ENCODE measurements at regions of chr4 and their contacts with region 1.

Region 1: DNA sequence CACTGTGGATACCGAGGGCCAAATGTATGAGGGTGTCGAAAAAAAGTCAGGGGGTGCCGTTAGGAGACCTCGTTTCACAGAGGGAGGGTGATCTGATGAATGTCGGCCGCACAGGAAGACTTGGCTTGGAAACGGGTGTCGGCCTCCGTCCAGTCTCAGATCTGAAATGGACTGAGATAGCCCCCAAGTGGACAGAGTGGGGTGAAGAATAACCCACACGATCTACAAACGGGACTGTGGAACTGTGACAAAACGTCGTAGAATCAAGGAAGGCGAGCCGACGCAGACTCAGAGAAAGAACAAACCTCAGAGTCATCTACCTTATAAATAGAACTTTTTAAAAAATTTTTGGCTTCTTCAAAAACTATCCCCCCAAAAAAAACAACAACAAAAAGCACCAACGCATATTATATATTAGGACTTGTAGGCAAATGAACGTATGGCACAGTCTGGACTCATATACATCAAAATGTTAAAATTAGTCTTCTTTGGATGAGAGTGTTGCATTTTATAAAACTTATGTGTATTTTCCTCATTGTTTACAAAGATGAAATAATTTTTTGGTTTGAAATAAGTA is 63.8 kb upstream of the IRF2 start:
- DNase-seq: peak; percentile 75
- H3K4me3 Mint-ChIP-seq: peak overlapping the region; percentile 95
- H3K27ac Mint-ChIP-seq: peak overlapping the region; percentile 96
- H3K4me1 Mint-ChIP-seq: peaks cover 38% of the 10 kb centered on the region
- H3K27me3 Mint-ChIP-seq: no peaks in the 10 kb centered on the region

Region 2: GRCh38 chr4:184074989-184075388 is 463.1 kb before region 1 on chr4:
- CTCF ChIA-PET with region 1: no interaction called
- POLR2A ChIA-PET with region 1: no interaction called
- intact Hi-C with region 1: no loop called
- DNase-seq: no peak
- H3K4me3 Mint-ChIP-seq: no peak overlapping the region
- H3K27ac Mint-ChIP-seq: no peak overlapping the region
- H3K4me1 Mint-ChIP-seq: no peaks in the 10 kb centered on the region
- H3K27me3 Mint-ChIP-seq: peaks cover 21% of the 10 kb centered on the region

Region 3: GRCh38 chr4:184287697-184288255 is 250.3 kb before region 1 on chr4:
- CTCF ChIA-PET with region 1: interaction called, 5 read pairs
- POLR2A ChIA-PET with region 1: no interaction called
- intact Hi-C with region 1: loop called (anchors 1 kb)
- DNase-seq: no peak
- H3K4me3 Mint-ChIP-seq: no peak overlapping the region
- H3K27ac Mint-ChIP-seq: no peak overlapping the region
- H3K4me1 Mint-ChIP-seq: peaks cover 61% of the 10 kb centered on the region
- H3K27me3 Mint-ChIP-seq: peaks cover 4% of the 10 kb centered on the region

Region 4: DNA sequence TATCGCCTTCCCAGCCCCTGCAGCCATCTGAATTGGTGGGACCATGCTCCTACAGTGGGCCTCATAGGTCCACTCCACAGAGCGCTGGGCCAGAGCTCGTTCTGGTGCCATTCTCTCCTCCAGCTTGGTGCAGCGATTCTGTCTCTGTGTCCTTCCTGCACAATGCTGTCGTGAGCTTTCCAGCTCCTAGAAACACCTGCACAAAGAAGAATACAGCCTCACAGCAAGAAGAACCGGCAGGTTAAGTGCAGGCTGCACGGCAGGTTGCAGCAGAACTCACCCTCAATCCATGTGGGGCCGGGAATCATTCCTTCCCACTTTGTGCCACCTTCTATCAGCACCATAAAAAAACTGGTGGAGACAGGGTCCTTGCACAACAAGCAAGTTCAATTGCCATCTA is 219.3 kb before region 1 on chr4:
- CTCF ChIA-PET with region 1: no interaction called
- POLR2A ChIA-PET with region 1: no interaction called
- intact Hi-C with region 1: loop called (anchors 1 kb)
- DNase-seq: no peak
- H3K4me3 Mint-ChIP-seq: no peak overlapping the region
- H3K27ac Mint-ChIP-seq: no peak overlapping the region
- H3K4me1 Mint-ChIP-seq: peaks cover 34% of the 10 kb centered on the region
- H3K27me3 Mint-ChIP-seq: peaks cover 1% of the 10 kb centered on the region

Region 5: DNA sequence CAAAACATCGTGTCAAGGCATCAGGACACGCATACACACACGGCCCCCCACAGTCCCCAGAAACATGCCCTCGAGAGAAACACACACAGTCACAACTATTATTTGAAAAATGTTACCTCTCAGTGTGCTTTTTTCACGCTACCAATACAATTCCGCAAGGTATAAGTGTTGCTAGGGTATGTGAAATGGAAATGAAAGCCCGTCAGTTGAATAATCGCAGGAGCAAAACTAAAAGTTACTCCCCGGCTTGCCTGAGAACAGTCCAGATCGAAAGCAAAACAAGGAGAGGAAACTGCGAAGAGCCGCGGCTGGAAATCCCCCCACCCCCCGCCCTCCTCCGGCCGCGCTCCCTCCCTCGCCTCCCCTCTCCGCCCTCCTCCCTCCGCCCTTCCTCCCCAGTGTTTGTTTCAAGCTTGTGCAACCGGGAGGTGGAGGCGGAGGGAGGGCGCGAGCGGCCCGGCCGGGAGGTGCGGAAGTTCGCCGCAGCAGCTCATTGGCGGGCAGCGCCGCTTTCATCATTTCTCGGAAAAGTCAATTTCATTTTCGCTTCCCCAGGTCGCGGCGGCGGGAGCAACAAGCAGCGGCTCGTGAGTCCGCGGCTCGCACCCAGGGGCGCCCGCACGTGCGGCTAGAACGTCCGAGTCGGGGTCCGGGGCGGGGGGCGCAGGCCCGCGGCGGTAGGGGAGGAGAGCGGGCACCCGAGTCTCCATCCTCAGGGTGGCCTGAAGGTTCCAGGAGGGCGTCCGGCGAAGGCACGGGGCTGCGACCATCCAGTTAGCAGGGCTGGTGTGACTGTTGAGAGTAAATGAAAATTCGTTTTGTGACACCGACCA is 63.6 kb before region 1 on chr4 and contains the start of gene IRF2:
- CTCF ChIA-PET with region 1: interaction called, 13 read pairs
- POLR2A ChIA-PET with region 1: interaction called, 56 read pairs
- intact Hi-C with region 1: loop called (anchors 1 kb)
- DNase-seq: peak; percentile 99
- H3K4me3 Mint-ChIP-seq: peak within 1 kb of the TSS; percentile 99
- H3K27ac Mint-ChIP-seq: peak within 1 kb of the TSS; percentile 100
- H3K4me1 Mint-ChIP-seq: peaks cover 57% of the 10 kb centered on the region
- H3K27me3 Mint-ChIP-seq: no peaks in the 10 kb centered on the region
- total RNA-seq, gene IRF2: 48.1 to 50.9 TPM

Region 6: GRCh38 chr4:184575306-184575705 is 37.2 kb after region 1 on chr4:
- CTCF ChIA-PET with region 1: interaction called, 3 read pairs
- POLR2A ChIA-PET with region 1: interaction called, 3 read pairs
- intact Hi-C with region 1: loop called (anchors 1 kb)
- DNase-seq: no peak
- H3K4me3 Mint-ChIP-seq: no peak overlapping the region
- H3K27ac Mint-ChIP-seq: no peak overlapping the region
- H3K4me1 Mint-ChIP-seq: peaks cover 17% of the 10 kb centered on the region
- H3K27me3 Mint-ChIP-seq: no peaks in the 10 kb centered on the region

Region 7: GRCh38 chr4:185203486-185204237 is 665.6 kb after region 1 on chr4 and contains the start of gene CFAP97:
- CTCF ChIA-PET with region 1: no interaction called
- POLR2A ChIA-PET with region 1: no interaction called
- intact Hi-C with region 1: loop called (anchors 5 kb)
- DNase-seq: peak; percentile 81
- H3K4me3 Mint-ChIP-seq: peak within 1 kb of the TSS; percentile 94
- H3K27ac Mint-ChIP-seq: peak within 1 kb of the TSS; percentile 97
- H3K4me1 Mint-ChIP-seq: peaks cover 48% of the 10 kb centered on the region
- H3K27me3 Mint-ChIP-seq: no peaks in the 10 kb centered on the region
- total RNA-seq, gene CFAP97: 47.5 to 48.6 TPM